Psoas muscle (tissue), 8 donors: ENCODE measurements at regions of chrX and their contacts with region 1.

Region 1: DNA sequence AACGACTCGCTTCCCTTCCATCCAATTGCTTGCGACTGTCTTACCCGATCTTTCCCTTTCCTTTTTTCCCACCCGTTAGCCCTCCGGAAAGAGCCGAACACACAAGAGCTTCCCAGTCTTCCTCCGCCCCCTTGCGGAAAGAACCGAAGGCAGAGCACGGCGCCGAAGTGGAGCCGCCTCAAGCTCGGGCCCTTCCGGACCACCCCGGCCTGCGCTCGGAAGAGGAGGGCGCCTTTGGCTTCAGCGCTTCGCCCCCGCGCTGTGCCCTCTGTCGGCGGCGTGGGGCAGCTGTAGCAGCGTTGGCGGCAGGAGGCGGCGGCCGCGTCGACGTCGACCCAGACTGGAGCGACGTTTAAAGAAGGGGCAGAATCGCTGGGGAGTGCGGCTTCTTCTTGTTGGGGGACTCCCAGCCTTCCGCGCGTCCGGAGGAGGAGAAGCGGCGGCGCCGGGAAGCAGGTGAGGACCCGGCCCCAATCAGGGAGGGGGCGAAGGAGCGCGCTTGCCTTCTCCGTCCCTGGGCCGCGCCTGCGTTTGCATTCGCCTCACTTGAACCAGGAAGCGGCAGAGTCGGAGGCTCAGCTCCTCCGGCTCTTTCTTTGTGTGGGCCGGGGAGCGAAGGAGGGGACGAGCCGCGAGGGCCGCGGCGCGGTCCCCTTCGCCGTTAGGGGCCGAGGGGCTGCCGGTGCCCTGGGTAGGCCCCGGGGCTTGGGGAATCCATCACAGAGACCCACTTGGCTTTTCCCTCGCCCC is at the start of gene ZBTB33:
- DNase-seq: peak; percentile 89 to 96
- ATAC-seq: peak; percentile 99 to 100 (median 100)
- H3K4me3 ChIP-seq: peak within 1 kb of the TSS; percentile 78
- H3K27ac ChIP-seq: peak within 1 kb of the TSS; percentile 87
- H3K4me1 ChIP-seq: no peaks in the 10 kb centered on the region
- H3K27me3 ChIP-seq: no peaks in the 10 kb centered on the region
- CTCF ChIP-seq: peak; percentile 64
- total RNA-seq, gene ZBTB33: 7.5 to 8.6 (median 7.7) TPM

Region 2: DNA sequence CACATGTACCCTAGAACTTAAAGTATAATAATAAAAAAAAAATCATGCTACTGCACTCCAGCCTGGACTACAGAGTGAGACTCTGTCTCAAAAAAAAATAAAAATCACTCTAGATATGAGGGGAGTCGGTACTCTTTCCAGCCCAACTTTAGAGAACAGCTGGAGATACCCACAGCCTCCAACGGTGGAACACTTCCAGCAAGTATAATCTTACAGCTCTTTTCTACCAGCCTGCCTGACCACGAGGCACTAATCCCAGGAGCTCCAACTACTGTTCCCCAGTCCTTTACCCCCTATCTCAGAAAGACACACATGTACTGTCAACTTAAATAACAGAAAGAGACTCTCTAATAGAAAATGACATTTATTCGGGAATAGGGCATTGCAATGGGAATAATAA is 732.3 kb before region 1 on chrX:
- intact Hi-C with region 1: no loop called
- DNase-seq: no peak
- ATAC-seq: no peak
- H3K4me3 ChIP-seq: no peak overlapping the region
- H3K27ac ChIP-seq: no peak overlapping the region
- H3K4me1 ChIP-seq: no peaks in the 10 kb centered on the region
- H3K27me3 ChIP-seq: no peaks in the 10 kb centered on the region
- CTCF ChIP-seq: no peak

Region 3: GRCh38 chrX:120308959-120309872 is 58.5 kb after region 1 on chrX:
- intact Hi-C with region 1: loop called in 1 of 2 experiments (anchors 5 kb)
- DNase-seq: peak; percentile 52 to 78
- ATAC-seq: peak; percentile 88 to 96 (median 90)
- H3K4me3 ChIP-seq: peak overlapping the region; percentile 61
- H3K27ac ChIP-seq: no peak overlapping the region
- H3K4me1 ChIP-seq: no peaks in the 10 kb centered on the region
- H3K27me3 ChIP-seq: peaks cover 0 to 21% (median 3%) of the 10 kb centered on the region in 3 donors
- CTCF ChIP-seq: peak; percentile 35

Region 4: GRCh38 chrX:120457766-120458180 is 207.1 kb after region 1 on chrX:
- intact Hi-C with region 1: loop called in 1 of 2 experiments (anchors 10 kb)
- DNase-seq: no peak
- ATAC-seq: peak; percentile 56 to 75 (median 62)
- H3K4me3 ChIP-seq: no peak overlapping the region
- H3K27ac ChIP-seq: peak overlapping the region; percentile 62
- H3K4me1 ChIP-seq: peaks cover 22% of the 10 kb centered on the region
- H3K27me3 ChIP-seq: no peaks in the 10 kb centered on the region
- CTCF ChIP-seq: no peak